CD4-positive, alpha-beta T cell (primary cell): ENCODE measurements at regions of chrX and their contacts with region 1.

Region 1: DNA sequence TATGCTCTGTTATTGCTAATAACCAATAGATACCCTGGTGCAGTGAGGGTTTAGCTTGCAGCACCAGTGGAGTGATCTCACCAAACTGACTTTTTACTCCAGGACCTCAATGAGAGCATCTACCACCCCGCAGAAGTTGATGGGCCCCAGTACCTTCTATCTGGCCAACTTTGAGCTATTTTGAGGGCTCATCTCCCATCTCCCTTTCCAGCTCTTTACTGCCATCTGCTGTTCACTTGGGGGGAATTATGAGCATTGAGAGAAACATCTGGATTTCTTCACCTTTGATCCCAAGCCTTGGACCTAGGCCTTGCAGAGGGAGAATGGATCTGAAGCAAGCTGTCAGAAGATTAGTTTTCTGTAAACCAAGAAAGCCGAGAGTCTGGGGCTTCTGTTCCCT is 143.6 kb downstream of the TMEM164 start:
- DNase-seq: peak in 6 of 14 experiments; percentile 1 to 60 (median 46)
- ATAC-seq: peak; percentile 58
- H3K4me3 ChIP-seq: no peak overlapping the region
- H3K4me3 Mint-ChIP-seq: no peak overlapping the region
- H3K27ac ChIP-seq: no peak overlapping the region
- H3K27ac Mint-ChIP-seq: no peak overlapping the region
- H3K4me1 ChIP-seq: peaks cover 9% of the 10 kb centered on the region
- H3K4me1 Mint-ChIP-seq: peaks cover 5% of the 10 kb centered on the region
- H3K27me3 ChIP-seq: no peaks in the 10 kb centered on the region
- H3K27me3 Mint-ChIP-seq: no peaks in the 10 kb centered on the region
- CTCF ChIP-seq: peak; percentile 51

Region 2: DNA sequence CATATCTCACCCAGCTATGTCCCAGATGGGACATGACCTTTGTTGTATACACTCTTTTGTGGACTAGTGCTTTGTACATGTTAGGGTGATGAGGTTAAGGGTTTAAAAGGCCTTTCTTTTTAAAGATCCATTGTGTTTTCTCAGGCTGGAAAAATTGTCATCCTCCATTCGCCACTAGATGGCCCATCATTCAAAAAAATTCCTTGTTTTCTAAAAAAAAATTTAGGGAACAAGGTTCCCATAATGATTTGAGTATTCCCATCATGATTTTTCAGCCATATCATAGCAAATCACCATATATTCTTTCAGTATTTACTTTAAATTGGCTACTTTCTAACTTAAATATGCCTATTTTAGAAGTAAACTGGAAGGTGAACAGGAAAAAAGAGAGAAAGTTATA is 235.5 kb before region 1 on chrX:
- CTCF ChIA-PET with region 1: no interaction called
- POLR2A ChIA-PET with region 1: no interaction called
- intact Hi-C with region 1: loop called in 1 of 2 experiments (anchors 5 kb)
- DNase-seq: no peak
- ATAC-seq: no peak
- H3K4me3 ChIP-seq: no peak overlapping the region
- H3K4me3 Mint-ChIP-seq: no peak overlapping the region
- H3K27ac ChIP-seq: no peak overlapping the region
- H3K27ac Mint-ChIP-seq: no peak overlapping the region
- H3K4me1 ChIP-seq: no peaks in the 10 kb centered on the region
- H3K4me1 Mint-ChIP-seq: no peaks in the 10 kb centered on the region
- H3K27me3 ChIP-seq: peaks cover 0 to 10% of the 10 kb centered on the region in 2 experiments
- H3K27me3 Mint-ChIP-seq: no peaks in the 10 kb centered on the region
- CTCF ChIP-seq: no peak

Region 3: GRCh38 chrX:110066488-110067225 is 79.9 kb before region 1 on chrX:
- CTCF ChIA-PET with region 1: no interaction called
- POLR2A ChIA-PET with region 1: no interaction called
- intact Hi-C with region 1: no loop called
- DNase-seq: no peak
- ATAC-seq: no peak
- H3K4me3 ChIP-seq: no peak overlapping the region
- H3K4me3 Mint-ChIP-seq: no peak overlapping the region
- H3K27ac ChIP-seq: no peak overlapping the region
- H3K27ac Mint-ChIP-seq: no peak overlapping the region
- H3K4me1 ChIP-seq: no peaks in the 10 kb centered on the region
- H3K4me1 Mint-ChIP-seq: no peaks in the 10 kb centered on the region
- H3K27me3 ChIP-seq: no peaks in the 10 kb centered on the region
- H3K27me3 Mint-ChIP-seq: no peaks in the 10 kb centered on the region
- CTCF ChIP-seq: no peak

Region 4: DNA sequence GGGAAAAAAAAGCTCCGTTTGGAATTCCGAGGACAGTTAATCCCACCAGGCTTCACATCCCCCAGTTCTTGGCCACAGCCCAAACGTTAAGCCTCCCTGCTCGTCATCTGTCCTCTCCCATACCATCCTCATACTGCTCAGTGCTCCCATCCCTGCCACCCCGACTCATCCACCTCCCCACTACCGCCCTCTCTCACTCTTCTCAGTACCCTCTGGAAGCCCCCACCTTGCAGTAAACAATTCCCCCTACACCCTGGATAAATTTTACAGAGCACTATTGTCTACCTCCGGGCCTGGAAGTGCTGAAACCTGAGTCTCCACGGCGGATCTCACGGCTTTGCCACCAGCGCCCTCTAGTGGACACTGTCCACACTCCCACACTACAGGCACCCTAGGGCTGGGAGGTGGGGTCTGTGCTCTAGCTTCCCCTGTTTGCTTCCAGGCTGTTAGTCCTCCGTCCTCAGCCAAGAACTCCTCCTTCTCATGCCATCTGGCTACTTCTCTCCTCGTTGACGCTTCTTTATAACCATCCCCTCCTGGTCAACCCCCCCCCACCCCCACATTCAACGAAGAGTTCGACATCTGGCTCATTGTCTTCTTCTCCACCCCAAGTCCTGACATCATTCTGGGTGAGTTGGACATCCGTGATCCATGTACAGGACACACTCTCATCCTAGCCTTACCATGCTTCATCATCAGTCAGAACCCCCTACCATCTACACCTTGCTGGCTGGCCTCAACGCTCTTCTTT is 266.6 kb after region 1 on chrX:
- CTCF ChIA-PET with region 1: interaction called, 4 read pairs
- POLR2A ChIA-PET with region 1: no interaction called
- intact Hi-C with region 1: loop called in 1 of 2 experiments (anchors 2 kb)
- DNase-seq: peak; percentile 41 to 80 (median 60)
- ATAC-seq: peak; percentile 89
- H3K4me3 ChIP-seq: no peak overlapping the region
- H3K4me3 Mint-ChIP-seq: no peak overlapping the region
- H3K27ac ChIP-seq: no peak overlapping the region
- H3K27ac Mint-ChIP-seq: no peak overlapping the region
- H3K4me1 ChIP-seq: peaks cover 2% of the 10 kb centered on the region
- H3K4me1 Mint-ChIP-seq: no peaks in the 10 kb centered on the region
- H3K27me3 ChIP-seq: no peaks in the 10 kb centered on the region
- H3K27me3 Mint-ChIP-seq: no peaks in the 10 kb centered on the region
- CTCF ChIP-seq: peak; percentile 69